CD8-positive, alpha-beta T cell (primary cell): ENCODE measurements at regions of chr6 and their contacts with region 1.

Region 1: DNA sequence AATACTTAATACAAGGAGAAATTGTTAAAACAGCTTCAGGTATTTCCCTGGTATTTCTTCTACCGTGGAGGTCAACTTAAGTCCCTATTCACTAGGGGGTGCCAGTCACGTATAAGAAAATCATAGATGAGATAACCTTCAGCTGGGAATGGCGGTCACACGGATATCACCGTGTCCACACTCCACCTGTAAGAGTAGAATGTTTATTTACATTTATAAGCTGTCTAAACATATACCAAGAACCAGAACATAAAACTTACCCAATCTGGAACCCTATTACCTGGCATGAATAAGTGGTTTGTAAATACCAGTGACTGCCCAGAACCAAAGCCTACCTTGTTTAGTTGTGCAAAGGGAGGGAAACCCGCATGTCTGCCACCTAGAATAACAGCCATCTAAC is 1.9 kb upstream of the ELOVL4 start:
- DNase-seq: peak in 7 of 9 experiments; percentile 25 to 88 (median 57)
- ATAC-seq: peak; percentile 24
- H3K4me3 ChIP-seq: no peak overlapping the region
- H3K4me3 Mint-ChIP-seq: peak overlapping the region; percentile 9
- H3K27ac ChIP-seq: no peak overlapping the region
- H3K27ac Mint-ChIP-seq: peak overlapping the region; percentile 5
- H3K4me1 ChIP-seq: peaks cover 16% of the 10 kb centered on the region
- H3K4me1 Mint-ChIP-seq: peaks cover 27% of the 10 kb centered on the region
- H3K27me3 ChIP-seq: no peaks in the 10 kb centered on the region
- H3K27me3 Mint-ChIP-seq: peaks cover 2% of the 10 kb centered on the region
- CTCF ChIP-seq: peak; percentile 80

Region 2: GRCh38 chr6:79964607-79965081 is 15.4 kb after region 1 on chr6:
- CTCF ChIA-PET with region 1: interaction called, 11 read pairs
- POLR2A ChIA-PET with region 1: interaction called, 3 read pairs
- intact Hi-C with region 1: no loop called
- DNase-seq: peak in 3 of 9 experiments; percentile 27 to 38 (median 35)
- ATAC-seq: peak; percentile 82
- H3K4me3 ChIP-seq: no peak overlapping the region
- H3K4me3 Mint-ChIP-seq: no peak overlapping the region
- H3K27ac ChIP-seq: no peak overlapping the region
- H3K27ac Mint-ChIP-seq: peak overlapping the region; percentile 65
- H3K4me1 ChIP-seq: no peaks in the 10 kb centered on the region
- H3K4me1 Mint-ChIP-seq: peaks cover 11% of the 10 kb centered on the region
- H3K27me3 ChIP-seq: no peaks in the 10 kb centered on the region
- H3K27me3 Mint-ChIP-seq: no peaks in the 10 kb centered on the region
- CTCF ChIP-seq: no peak